Adrenal gland (tissue), 19 donors: ENCODE measurements at regions of chr3 and their contacts with region 1.

Region 1: GRCh38 chr3:48439820-48440589 is at the starts of genes CCDC51 and TMA7:
- DNase-seq: peak; percentile 98 to 99 (median 99)
- H3K4me3 ChIP-seq: peak within 1 kb of the TSS; percentile 71 to 99 (median 92)
- H3K27ac ChIP-seq: peak within 1 kb of the TSS; percentile 67 to 95 (median 91)
- H3K4me1 ChIP-seq: peaks cover 18 to 29% of the 10 kb centered on the region in 2 donors
- H3K27me3 ChIP-seq: no peaks in the 10 kb centered on the region
- CTCF ChIP-seq: no peak
- POLR2A ChIP-seq: peak; percentile 80 to 91
- total RNA-seq, gene CCDC51: 14.3 to 30.4 (median 19.5) TPM
- total RNA-seq, gene TMA7: 177 to 603 (median 238) TPM

Region 2: DNA sequence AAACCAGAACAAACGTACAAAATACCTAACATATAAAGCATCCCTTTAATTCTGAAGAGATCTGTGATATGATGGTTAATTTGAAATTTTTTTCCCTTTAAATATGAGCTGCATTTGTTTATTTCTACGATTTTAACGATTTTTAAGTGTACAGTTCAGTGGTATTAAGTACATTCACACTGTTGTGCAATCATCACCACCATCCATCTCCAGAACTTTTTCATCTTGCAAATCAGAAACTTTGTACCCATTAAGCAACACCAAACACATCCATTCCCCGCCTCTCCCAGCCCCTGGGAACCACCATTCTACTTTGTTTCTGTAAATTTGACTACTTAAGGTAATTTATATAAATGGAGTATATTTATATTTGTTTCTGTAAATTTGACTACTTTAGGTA is 475.3 kb before region 1 on chr3:
- intact Hi-C with region 1: no loop called
- DNase-seq: no peak
- H3K4me3 ChIP-seq: no peak overlapping the region
- H3K27ac ChIP-seq: no peak overlapping the region
- H3K4me1 ChIP-seq: peaks cover 0 to 20% of the 10 kb centered on the region in 2 donors
- H3K27me3 ChIP-seq: no peaks in the 10 kb centered on the region
- CTCF ChIP-seq: no peak
- POLR2A ChIP-seq: no peak

Region 3: GRCh38 chr3:48194446-48195071 is 245.4 kb before region 1 on chr3:
- intact Hi-C with region 1: loop called in 1 of 2 experiments (anchors 10 kb)
- DNase-seq: peak; percentile 55 to 86 (median 66)
- H3K4me3 ChIP-seq: no peak overlapping the region
- H3K27ac ChIP-seq: no peak overlapping the region
- H3K4me1 ChIP-seq: no peaks in the 10 kb centered on the region
- H3K27me3 ChIP-seq: no peaks in the 10 kb centered on the region
- CTCF ChIP-seq: peak; percentile 53 to 79 (median 72)
- POLR2A ChIP-seq: no peak

Region 4: DNA sequence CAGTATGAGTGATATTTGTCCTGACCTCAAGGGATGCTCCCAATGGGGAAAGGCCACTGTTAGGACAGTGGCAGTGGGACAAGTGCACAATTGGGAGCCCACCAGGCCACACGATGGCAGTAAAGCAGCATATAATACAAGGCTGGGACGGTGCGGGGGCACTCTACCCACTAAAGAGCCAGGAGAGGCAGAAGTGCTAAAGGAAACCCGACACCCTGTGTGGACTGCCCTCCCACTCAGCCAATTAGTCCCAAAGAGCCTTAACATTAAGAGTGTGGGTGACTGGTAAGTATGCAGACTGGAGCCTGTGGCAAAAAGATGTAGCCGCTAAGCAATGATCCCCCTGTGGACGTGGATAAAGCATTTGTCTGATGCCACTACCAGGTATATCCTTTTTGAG is 207.3 kb before region 1 on chr3:
- intact Hi-C with region 1: loop called in 1 of 2 experiments (anchors 5 kb)
- DNase-seq: peak; percentile 62 to 90 (median 83)
- H3K4me3 ChIP-seq: no peak overlapping the region
- H3K27ac ChIP-seq: no peak overlapping the region
- H3K4me1 ChIP-seq: peaks cover 15 to 23% of the 10 kb centered on the region in 2 donors
- H3K27me3 ChIP-seq: no peaks in the 10 kb centered on the region
- CTCF ChIP-seq: peak; percentile 38 to 75 (median 62)
- POLR2A ChIP-seq: no peak

Region 5: DNA sequence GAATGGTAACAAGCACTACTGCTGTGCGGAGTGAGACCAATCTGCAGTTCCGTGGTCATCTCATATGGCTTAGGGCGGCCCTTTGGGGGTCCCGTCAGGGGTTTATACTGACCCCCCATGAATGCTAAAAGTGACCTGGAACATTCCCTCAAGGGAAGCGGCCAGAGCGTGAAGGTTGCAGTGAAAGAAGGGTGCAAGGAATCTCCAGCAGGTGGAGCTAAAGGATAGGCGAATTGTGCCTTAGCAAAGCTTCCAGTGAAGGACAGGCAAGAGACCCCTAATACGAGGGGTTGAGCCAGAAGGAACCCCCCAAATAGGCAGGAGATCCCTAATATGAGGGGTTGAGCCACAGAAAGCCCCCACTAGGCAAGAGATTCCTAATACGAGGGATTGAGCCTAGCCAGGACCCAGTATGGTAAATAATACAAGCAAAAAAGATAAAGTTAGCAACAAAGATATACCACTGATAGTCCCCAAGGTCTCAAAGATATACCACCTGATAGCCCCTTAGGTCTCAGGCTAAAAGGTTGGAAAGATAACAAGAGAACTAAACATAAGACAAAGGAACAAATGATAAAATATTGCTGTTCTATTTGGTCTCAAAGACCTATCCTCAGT is 166.3 kb before region 1 on chr3:
- intact Hi-C with region 1: loop called in 1 of 2 experiments (anchors 5 kb)
- DNase-seq: peak; percentile 37 to 80 (median 55)
- H3K4me3 ChIP-seq: no peak overlapping the region
- H3K27ac ChIP-seq: no peak overlapping the region
- H3K4me1 ChIP-seq: no peaks in the 10 kb centered on the region
- H3K27me3 ChIP-seq: no peaks in the 10 kb centered on the region
- CTCF ChIP-seq: peak; percentile 58 to 80 (median 74)
- POLR2A ChIP-seq: no peak

Region 6: GRCh38 chr3:48320996-48321395 is 119.0 kb before region 1 on chr3:
- intact Hi-C with region 1: no loop called
- DNase-seq: no peak
- H3K4me3 ChIP-seq: no peak overlapping the region
- H3K27ac ChIP-seq: no peak overlapping the region
- H3K4me1 ChIP-seq: no peaks in the 10 kb centered on the region
- H3K27me3 ChIP-seq: no peaks in the 10 kb centered on the region
- CTCF ChIP-seq: no peak
- POLR2A ChIP-seq: no peak

Region 7: GRCh38 chr3:48402281-48402732 is 37.7 kb before region 1 on chr3:
- intact Hi-C with region 1: loop called in 1 of 2 experiments (anchors 5 kb)
- DNase-seq: peak; percentile 71 to 91 (median 86)
- H3K4me3 ChIP-seq: no peak overlapping the region
- H3K27ac ChIP-seq: peak overlapping the region in 3 of 5 donors; percentile 16 to 81 (median 80)
- H3K4me1 ChIP-seq: peaks cover 0 to 5% of the 10 kb centered on the region in 2 donors
- H3K27me3 ChIP-seq: no peaks in the 10 kb centered on the region
- CTCF ChIP-seq: no peak
- POLR2A ChIP-seq: no peak